AG04450 (cell line): ENCODE measurements at regions of chr16 and their contacts with region 1.

Region 1: GRCh38 chr16:66740010-66740409 is 11.4 kb downstream of the DYNC1LI2 start:
- DNase-seq: no peak
- H3K4me3 ChIP-seq: no peak overlapping the region
- H3K27ac ChIP-seq: no peak overlapping the region
- H3K27me3 ChIP-seq: no peaks in the 10 kb centered on the region
- CTCF ChIP-seq: peak; percentile 67

Region 2: DNA sequence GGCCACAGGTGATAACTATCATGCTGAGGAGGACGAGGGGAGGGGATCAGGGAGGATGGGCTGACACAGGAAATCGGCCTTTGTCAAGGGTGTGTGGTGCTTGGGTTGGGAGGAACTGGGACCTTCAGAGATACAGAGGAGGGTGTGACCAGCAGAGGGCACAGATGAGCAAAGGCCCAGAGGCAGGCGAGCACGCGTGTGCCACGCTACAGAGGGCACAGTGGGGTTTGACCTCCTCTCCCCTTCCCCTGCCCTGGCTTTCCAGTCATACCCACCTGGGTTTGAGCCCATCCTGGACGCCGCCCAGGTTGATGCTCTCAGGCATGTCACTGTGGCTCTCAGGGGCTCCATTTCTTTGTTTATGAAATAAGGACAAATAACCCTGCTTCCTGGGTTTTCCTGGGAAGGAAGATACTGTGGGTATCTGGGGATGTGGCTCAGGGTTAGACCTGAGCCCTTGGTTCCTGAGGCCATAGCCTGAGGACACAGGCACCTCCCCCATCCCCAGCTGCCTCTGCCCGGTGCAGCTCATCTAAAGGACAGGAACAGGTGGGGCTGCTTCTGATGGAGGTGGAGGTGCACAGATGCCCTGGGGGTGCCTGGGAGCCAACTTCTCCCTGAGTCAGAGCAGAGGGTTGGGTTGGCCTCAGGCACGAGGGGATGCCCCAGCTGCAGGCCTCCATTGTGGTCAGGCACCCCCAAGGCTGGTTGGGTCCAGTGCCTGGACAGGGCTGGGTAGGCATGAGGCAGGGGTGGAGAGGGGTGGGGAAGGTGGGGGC is 261.1 kb before region 1 on chr16:
- CTCF ChIA-PET with region 1: no interaction called
- POLR2A ChIA-PET with region 1: no interaction called
- DNase-seq: no peak
- H3K4me3 ChIP-seq: no peak overlapping the region
- H3K27ac ChIP-seq: no peak overlapping the region
- H3K27me3 ChIP-seq: peaks cover 10% of the 10 kb centered on the region
- CTCF ChIP-seq: peak; percentile 83

Region 3: DNA sequence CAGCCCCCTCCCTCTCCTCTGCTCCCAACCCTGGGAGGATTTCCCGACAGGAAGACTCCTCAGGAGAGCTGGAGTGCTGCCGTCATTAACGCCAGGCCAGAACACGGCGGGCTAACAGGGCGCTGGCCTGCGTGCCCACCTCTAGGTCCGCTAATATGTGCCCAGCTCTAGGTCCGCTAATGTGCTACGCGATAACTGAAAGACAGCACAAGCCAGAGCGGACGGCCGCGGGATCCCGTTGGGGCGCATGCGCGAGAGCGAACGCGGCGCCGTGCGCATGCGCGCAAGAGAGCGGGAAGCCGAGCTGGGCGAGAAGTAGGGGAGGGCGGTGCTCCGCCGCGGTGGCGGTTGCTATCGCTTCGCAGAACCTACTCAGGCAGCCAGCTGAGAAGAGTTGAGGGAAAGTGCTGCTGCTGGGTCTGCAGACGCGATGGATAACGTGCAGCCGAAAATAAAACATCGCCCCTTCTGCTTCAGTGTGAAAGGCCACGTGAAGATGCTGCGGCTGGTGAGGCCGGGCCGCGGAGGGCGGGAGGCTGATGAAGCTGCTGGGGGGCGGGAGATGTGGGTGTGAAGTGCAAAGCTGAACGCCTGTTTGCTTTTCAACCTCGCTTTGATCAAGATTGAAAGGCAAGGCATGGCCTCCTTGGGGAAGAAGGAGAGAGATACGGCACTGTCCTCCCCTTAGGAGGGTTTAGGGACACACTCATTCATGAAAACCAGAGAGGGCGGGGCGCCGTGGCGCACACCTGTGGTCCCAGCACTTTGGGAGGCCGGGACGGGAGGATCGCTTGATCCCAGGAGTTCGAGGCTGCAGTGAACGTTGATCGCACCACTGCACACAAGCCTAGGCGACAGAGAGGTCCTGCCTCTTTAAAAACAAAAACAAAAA is 187.5 kb before region 1 on chr16 and contains the start of gene CKLF:
- CTCF ChIA-PET with region 1: no interaction called
- POLR2A ChIA-PET with region 1: interaction called, 10 read pairs
- DNase-seq: peak; percentile 70
- H3K4me3 ChIP-seq: peak within 1 kb of the TSS; percentile 88
- H3K27ac ChIP-seq: peak within 1 kb of the TSS; percentile 77
- H3K27me3 ChIP-seq: no peaks in the 10 kb centered on the region
- CTCF ChIP-seq: no peak
- polyA plus RNA-seq, gene CKLF: 52.6 and 56.2 TPM in 2 replicates

Region 4: GRCh38 chr16:66618588-66619375 is 121.2 kb before region 1 on chr16:
- CTCF ChIA-PET with region 1: interaction called, 3 read pairs
- POLR2A ChIA-PET with region 1: interaction called, 10 read pairs
- DNase-seq: peak; percentile 81
- H3K4me3 ChIP-seq: no peak overlapping the region
- H3K27ac ChIP-seq: peak overlapping the region; percentile 88
- H3K27me3 ChIP-seq: no peaks in the 10 kb centered on the region
- CTCF ChIP-seq: no peak

Region 5: DNA sequence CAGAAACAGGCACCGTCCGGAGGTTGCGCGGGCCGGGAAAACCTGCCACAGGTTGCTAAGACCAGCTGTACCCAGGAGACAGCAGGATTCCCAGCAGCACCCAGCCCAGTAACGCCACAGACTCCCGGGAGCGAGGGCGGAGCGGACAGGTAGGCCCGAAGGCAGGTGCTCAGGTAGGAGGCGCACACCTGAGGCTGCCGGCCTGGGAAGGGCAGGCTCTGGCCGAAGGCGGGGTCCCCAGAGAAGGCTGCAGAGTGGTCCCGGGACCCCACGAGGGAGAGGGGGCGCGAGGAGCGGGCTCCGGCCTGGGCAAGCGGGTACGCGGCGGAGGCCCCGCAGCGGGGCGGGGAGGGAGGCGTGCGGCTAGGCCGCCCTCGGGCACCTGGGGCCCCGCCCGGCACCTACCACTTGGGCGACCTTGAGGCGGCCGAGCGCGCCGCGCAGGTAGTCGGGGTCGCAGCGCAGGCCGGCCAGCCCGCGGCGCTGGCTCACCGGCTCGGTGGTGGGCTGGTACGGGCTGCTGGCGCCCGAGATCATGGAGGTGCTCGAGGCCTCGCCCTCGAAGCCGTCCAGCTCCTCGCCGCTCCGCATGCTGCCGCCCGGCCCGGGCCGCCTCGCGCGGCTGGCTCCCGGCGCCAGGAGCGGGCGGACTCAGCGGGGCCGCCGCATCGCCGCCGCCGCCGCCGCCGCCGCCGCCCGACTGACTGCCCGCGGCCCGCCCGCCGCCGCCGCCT is 43.9 kb before region 1 on chr16:
- CTCF ChIA-PET with region 1: interaction called, 10 read pairs
- POLR2A ChIA-PET with region 1: no interaction called
- DNase-seq: no peak
- H3K4me3 ChIP-seq: peak overlapping the region; percentile 70
- H3K27ac ChIP-seq: no peak overlapping the region
- H3K27me3 ChIP-seq: peaks cover 5% of the 10 kb centered on the region
- CTCF ChIP-seq: no peak

Region 6: DNA sequence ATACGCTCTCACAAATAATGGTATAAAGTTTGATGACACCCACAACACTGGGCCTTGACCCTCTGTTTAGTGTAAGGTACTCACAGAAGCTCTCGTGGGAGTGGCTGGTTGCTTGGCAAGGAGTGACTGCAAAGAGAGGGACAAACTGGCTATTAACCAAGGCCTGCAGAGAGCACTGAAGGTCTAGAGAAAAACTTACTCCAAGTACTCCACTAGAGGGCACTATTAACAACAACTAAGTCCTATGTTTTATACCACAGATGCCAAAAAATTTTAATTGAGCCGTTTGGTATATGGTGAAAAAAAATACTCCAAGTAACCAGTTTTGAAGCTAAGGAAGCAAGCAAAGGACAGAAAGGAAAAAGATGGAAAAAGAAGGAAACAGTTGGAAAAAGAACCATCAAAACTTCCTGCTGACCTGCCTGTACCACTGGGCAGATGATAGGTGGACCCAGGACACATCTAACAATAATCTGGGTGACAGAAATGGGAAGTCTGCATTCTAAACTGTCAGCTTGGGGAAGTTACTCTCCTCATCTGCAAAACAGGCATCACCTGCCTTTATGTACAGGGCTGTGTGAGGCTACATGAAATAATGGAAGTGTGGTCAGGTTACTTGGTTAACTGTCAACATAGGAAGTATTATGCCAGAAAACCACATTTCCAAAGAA is 11.8 kb before region 1 on chr16:
- CTCF ChIA-PET with region 1: interaction called, 59 read pairs
- POLR2A ChIA-PET with region 1: interaction called, 5 read pairs
- DNase-seq: no peak
- H3K4me3 ChIP-seq: no peak overlapping the region
- H3K27ac ChIP-seq: no peak overlapping the region
- H3K27me3 ChIP-seq: no peaks in the 10 kb centered on the region
- CTCF ChIP-seq: peak; percentile 66

Region 7: GRCh38 chr16:66751303-66751991 is 11.4 kb after region 1 on chr16 and contains the start of gene DYNC1LI2:
- CTCF ChIA-PET with region 1: interaction called, 56 read pairs
- POLR2A ChIA-PET with region 1: interaction called, 13 read pairs
- DNase-seq: peak; percentile 20
- H3K4me3 ChIP-seq: peak within 1 kb of the TSS; percentile 97
- H3K27ac ChIP-seq: peak within 1 kb of the TSS; percentile 31
- H3K27me3 ChIP-seq: peaks cover 6% of the 10 kb centered on the region
- CTCF ChIP-seq: peak; percentile 58
- polyA plus RNA-seq, gene DYNC1LI2: 86.7 and 88.5 TPM in 2 replicates